ENCODE measurements at regions of chrX and their contacts with region 1.

Region 1: GRCh38 chrX:111098874-111099273 is 2.9 kb downstream of the PAK3 start:
- DNase-seq: peak; percentile 23
- H3K4me3 Mint-ChIP-seq: no peak overlapping the region
- H3K27ac Mint-ChIP-seq: no peak overlapping the region
- H3K4me1 Mint-ChIP-seq: no peaks in the 10 kb centered on the region
- H3K27me3 Mint-ChIP-seq: peaks cover 42% of the 10 kb centered on the region
- CTCF ChIP-seq: peak; percentile 48

Region 2: DNA sequence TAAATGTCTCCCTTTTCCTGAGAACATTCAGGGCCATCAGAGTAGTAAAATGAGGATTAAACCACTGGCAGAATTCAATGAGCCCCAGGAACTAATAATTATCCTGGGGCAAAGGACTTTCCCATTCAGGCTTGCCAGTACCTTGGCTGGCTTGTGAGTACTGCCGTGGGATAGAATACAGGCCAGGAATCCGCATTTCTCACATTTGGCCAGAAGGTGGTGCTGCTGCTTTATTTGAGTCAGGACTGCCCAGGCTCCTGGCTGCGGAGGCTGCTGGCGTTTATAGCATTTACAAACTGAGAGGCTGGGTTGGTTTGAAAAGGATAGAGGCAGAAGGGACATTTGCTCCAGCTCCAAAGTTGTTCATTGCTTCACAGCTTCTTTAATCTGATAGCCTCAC is 648.8 kb before region 1 on chrX:
- CTCF ChIA-PET with region 1: interaction called, 5 read pairs
- POLR2A ChIA-PET with region 1: no interaction called
- intact Hi-C with region 1: loop called (anchors 2 kb)
- DNase-seq: peak; percentile 84
- H3K4me3 Mint-ChIP-seq: no peak overlapping the region
- H3K27ac Mint-ChIP-seq: no peak overlapping the region
- H3K4me1 Mint-ChIP-seq: no peaks in the 10 kb centered on the region
- H3K27me3 Mint-ChIP-seq: peaks cover 80% of the 10 kb centered on the region
- CTCF ChIP-seq: peak; percentile 88

Region 3: DNA sequence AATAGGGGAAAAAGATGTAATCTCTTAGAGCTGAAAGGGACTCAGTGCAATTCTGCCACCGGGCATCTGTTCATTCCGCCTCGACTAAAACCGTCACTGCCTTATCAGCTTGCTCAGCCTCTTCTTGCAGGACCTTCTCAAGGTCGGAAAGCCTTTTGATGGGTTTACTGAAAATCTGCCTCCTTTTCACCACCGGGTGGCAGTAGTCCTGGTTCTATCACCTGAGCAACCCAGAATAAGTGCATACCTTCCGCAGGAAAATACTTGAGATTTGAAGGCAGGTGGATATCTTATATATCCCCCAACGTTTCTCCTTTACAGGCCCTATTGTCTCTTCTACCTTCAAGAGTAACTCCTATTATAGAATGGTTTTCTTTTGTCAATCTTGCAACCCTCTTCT is 106.3 kb before region 1 on chrX:
- CTCF ChIA-PET with region 1: interaction called, 6 read pairs
- POLR2A ChIA-PET with region 1: no interaction called
- intact Hi-C with region 1: loop called (anchors 1 kb)
- DNase-seq: peak; percentile 51
- H3K4me3 Mint-ChIP-seq: no peak overlapping the region
- H3K27ac Mint-ChIP-seq: no peak overlapping the region
- H3K4me1 Mint-ChIP-seq: no peaks in the 10 kb centered on the region
- H3K27me3 Mint-ChIP-seq: peaks cover 67% of the 10 kb centered on the region
- CTCF ChIP-seq: peak; percentile 34

Region 4: DNA sequence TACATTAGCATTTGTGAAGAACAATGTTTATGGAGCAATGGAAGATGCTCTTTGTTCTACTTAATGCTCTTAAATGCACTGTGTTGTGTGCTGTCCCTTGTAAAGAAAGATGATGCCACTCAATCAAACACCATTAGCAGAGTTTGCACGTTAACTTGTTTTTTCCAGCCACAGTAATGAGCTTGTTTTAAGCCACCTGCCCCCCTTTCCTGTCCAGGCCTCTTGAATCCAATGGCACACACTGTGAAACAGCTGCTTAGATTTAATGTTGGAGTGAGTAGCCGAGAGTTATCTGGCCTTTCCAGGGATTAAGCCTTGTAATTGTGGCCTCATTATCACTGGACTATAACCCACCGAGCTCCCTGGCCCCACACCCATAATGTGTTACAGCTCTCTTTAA is 83.1 kb after region 1 on chrX:
- CTCF ChIA-PET with region 1: no interaction called
- POLR2A ChIA-PET with region 1: no interaction called
- intact Hi-C with region 1: no loop called
- DNase-seq: no peak
- H3K4me3 Mint-ChIP-seq: no peak overlapping the region
- H3K27ac Mint-ChIP-seq: no peak overlapping the region
- H3K4me1 Mint-ChIP-seq: no peaks in the 10 kb centered on the region
- H3K27me3 Mint-ChIP-seq: peaks cover 59% of the 10 kb centered on the region
- CTCF ChIP-seq: no peak

Measured in MCF 10A (cell line).